ENCODE measurements at regions of chr7 and their contacts with region 1.

Region 1: GRCh38 chr7:141003172-141004065 is 11.3 kb downstream of the MRPS33 start:
- DNase-seq: no peak
- H3K4me3 ChIP-seq: no peak overlapping the region
- H3K4me3 Mint-ChIP-seq: no peak overlapping the region
- H3K27ac ChIP-seq: no peak overlapping the region
- H3K27ac Mint-ChIP-seq: peak overlapping the region in 2 of 7 donors; percentile 7 to 23
- H3K4me1 ChIP-seq: no peaks in the 10 kb centered on the region
- H3K4me1 Mint-ChIP-seq: peaks cover 0 to 3% (median 0%) of the 10 kb centered on the region in 4 donors
- H3K27me3 ChIP-seq: no peaks in the 10 kb centered on the region
- H3K27me3 Mint-ChIP-seq: peaks cover 0 to 4% of the 10 kb centered on the region in 2 donors

Region 2: DNA sequence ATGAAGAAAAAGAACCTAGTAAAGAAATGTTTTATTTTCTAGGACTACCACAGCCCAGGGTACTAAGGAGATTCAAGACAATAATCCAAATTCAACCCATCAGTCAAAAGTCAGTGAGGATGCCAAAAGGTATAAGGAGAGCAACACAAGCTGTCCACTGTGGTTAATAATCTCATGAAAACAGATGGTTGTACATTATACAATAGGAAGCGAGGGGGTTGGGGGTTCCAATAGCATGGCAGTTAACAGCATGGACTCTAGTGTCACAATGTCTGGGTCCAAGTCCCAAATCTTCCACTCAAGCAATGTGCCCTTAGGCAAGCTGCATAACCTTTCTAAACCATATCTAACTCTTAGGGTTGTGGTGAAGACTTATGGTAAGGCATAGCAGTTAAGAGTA is 113.8 kb before region 1 on chr7:
- CTCF ChIA-PET with region 1: no interaction called
- POLR2A ChIA-PET with region 1: no interaction called
- intact Hi-C with region 1: no loop called
- DNase-seq: no peak
- H3K4me3 ChIP-seq: no peak overlapping the region
- H3K4me3 Mint-ChIP-seq: no peak overlapping the region
- H3K27ac ChIP-seq: no peak overlapping the region
- H3K27ac Mint-ChIP-seq: peak overlapping the region in 1 of 7 donors; percentile 40
- H3K4me1 ChIP-seq: peaks cover 12% of the 10 kb centered on the region
- H3K4me1 Mint-ChIP-seq: peaks cover 40 to 80% (median 56%) of the 10 kb centered on the region in 4 donors
- H3K27me3 ChIP-seq: no peaks in the 10 kb centered on the region
- H3K27me3 Mint-ChIP-seq: no peaks in the 10 kb centered on the region

Region 3: GRCh38 chr7:140977703-140978102 is 25.7 kb before region 1 on chr7:
- CTCF ChIA-PET with region 1: no interaction called
- POLR2A ChIA-PET with region 1: no interaction called
- intact Hi-C with region 1: loop called (anchors 1 kb)
- DNase-seq: no peak
- H3K4me3 ChIP-seq: no peak overlapping the region
- H3K4me3 Mint-ChIP-seq: no peak overlapping the region
- H3K27ac ChIP-seq: no peak overlapping the region
- H3K27ac Mint-ChIP-seq: peak overlapping the region in 1 of 7 donors; percentile 14
- H3K4me1 ChIP-seq: no peaks in the 10 kb centered on the region
- H3K4me1 Mint-ChIP-seq: no peaks in the 10 kb centered on the region
- H3K27me3 ChIP-seq: no peaks in the 10 kb centered on the region
- H3K27me3 Mint-ChIP-seq: peaks cover 4 to 9% of the 10 kb centered on the region in 2 donors